MCF 10A (cell line): ENCODE measurements at regions of chr11 and their contacts with region 1.

Region 1: DNA sequence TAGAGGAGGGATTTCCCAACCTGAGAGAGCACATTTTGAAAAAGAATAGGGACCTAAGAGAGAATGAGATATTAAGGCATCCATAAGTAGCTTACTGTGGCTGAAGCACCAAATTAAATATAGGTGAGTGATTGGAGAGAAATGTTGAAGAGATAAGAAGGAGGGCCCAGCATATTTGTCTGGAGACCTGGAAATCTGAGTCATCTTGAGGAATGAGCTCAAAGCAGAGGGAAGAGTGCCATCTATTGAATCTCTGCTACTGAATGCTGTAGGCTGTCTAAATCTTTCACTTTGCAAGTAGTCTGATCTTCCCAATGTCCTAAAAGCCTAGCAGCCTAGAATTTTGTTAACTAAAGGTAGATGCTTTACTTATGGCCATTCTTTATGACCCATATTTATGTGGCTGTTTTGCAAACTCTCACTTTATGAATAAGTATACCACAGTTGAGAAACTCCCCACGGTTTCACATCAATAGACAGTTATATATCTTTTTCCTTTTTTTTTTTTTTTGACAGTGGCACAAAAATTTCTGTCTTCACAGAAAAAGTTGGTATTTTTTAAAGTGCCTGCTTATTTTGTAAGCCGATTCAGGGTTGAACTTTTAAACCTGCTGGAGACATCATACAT is 2093.5 kb downstream of the LRRC4C start:
- DNase-seq: peak; percentile 62
- H3K4me3 Mint-ChIP-seq: no peak overlapping the region
- H3K27ac Mint-ChIP-seq: no peak overlapping the region
- H3K4me1 Mint-ChIP-seq: peaks cover 7% of the 10 kb centered on the region
- H3K27me3 Mint-ChIP-seq: no peaks in the 10 kb centered on the region
- CTCF ChIP-seq: peak; percentile 34

Region 2: DNA sequence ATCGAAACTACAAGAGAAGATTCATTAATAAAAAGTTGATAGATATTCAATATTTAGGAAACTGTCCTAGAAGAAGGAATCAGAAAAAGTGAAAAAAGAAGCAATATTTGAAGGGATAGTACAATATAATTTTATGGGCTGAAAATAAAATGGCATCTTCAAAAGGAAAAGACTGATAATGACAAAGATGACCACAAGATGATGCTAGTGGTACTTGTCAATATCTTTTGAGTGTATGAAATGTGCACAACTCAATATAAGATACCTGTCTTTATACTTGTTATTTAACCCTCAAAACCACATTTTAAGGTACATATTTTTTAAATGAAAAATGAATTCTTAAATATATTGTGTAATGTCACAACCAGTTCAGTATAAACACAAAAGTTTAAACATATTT is 1708.3 kb before region 1 on chr11:
- CTCF ChIA-PET with region 1: no interaction called
- POLR2A ChIA-PET with region 1: no interaction called
- intact Hi-C with region 1: loop called (anchors 5 kb)
- DNase-seq: peak; percentile 36
- H3K4me3 Mint-ChIP-seq: no peak overlapping the region
- H3K27ac Mint-ChIP-seq: no peak overlapping the region
- H3K4me1 Mint-ChIP-seq: no peaks in the 10 kb centered on the region
- H3K27me3 Mint-ChIP-seq: no peaks in the 10 kb centered on the region
- CTCF ChIP-seq: peak; percentile 37

Region 3: GRCh38 chr11:38791302-38791961 is 574.5 kb before region 1 on chr11:
- CTCF ChIA-PET with region 1: interaction called, 9 read pairs
- POLR2A ChIA-PET with region 1: interaction called, 4 read pairs
- intact Hi-C with region 1: loop called (anchors 1 kb)
- DNase-seq: peak; percentile 82
- H3K4me3 Mint-ChIP-seq: no peak overlapping the region
- H3K27ac Mint-ChIP-seq: no peak overlapping the region
- H3K4me1 Mint-ChIP-seq: no peaks in the 10 kb centered on the region
- H3K27me3 Mint-ChIP-seq: no peaks in the 10 kb centered on the region
- CTCF ChIP-seq: peak; percentile 76

Region 4: DNA sequence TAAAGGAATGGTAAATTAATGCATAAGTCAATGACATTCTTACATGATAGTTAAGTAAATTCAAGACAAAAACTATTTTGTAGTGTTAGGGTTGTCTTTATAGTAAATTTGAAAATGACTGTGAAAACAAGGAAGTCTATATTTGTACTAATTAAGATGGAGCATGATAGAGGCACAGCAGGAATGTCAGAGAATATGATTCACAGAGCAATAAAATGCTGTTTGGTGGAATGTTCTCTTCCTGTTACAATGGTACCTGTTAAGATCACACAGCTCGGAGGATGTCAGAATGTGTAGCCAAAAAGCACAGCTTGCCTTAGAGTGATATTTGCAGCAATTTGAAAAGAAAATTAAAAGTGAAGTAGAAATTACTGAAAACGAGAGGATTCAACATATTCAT is 428.2 kb before region 1 on chr11:
- CTCF ChIA-PET with region 1: no interaction called
- POLR2A ChIA-PET with region 1: no interaction called
- intact Hi-C with region 1: no loop called
- DNase-seq: no peak
- H3K4me3 Mint-ChIP-seq: no peak overlapping the region
- H3K27ac Mint-ChIP-seq: no peak overlapping the region
- H3K4me1 Mint-ChIP-seq: peaks cover 8% of the 10 kb centered on the region
- H3K27me3 Mint-ChIP-seq: no peaks in the 10 kb centered on the region
- CTCF ChIP-seq: no peak

Region 5: GRCh38 chr11:39192671-39193070 is 173.3 kb before region 1 on chr11:
- CTCF ChIA-PET with region 1: no interaction called
- POLR2A ChIA-PET with region 1: no interaction called
- intact Hi-C with region 1: no loop called
- DNase-seq: no peak
- H3K4me3 Mint-ChIP-seq: no peak overlapping the region
- H3K27ac Mint-ChIP-seq: no peak overlapping the region
- H3K4me1 Mint-ChIP-seq: no peaks in the 10 kb centered on the region
- H3K27me3 Mint-ChIP-seq: no peaks in the 10 kb centered on the region
- CTCF ChIP-seq: no peak

Region 6: DNA sequence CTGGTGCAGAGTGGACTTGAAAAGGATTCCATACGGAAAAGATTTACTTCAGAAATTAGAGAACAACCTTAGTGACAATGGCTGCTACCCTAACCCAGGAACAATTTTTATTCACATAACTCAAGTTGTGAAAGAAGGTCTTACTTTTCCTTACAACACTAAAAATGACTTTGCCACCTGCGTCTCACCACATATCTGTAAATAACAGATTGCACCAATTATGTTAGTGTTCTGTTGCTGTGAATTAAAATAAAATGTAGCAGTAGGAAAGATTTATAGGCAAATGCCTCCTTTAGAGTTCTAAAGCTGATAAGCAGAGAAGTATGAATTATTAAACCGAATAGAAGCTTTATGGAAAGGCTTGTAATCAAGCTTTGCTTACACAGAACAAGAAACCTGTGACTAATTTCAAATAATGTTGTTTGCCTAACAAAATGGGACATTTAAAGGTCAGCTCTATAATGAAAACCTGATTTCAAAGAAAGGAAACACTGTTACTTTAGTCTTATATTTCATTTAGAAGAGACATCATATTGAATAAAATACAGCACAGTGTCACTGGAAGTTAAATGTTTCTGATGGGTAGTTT is 144.3 kb before region 1 on chr11:
- CTCF ChIA-PET with region 1: no interaction called
- POLR2A ChIA-PET with region 1: no interaction called
- intact Hi-C with region 1: no loop called
- DNase-seq: no peak
- H3K4me3 Mint-ChIP-seq: no peak overlapping the region
- H3K27ac Mint-ChIP-seq: no peak overlapping the region
- H3K4me1 Mint-ChIP-seq: no peaks in the 10 kb centered on the region
- H3K27me3 Mint-ChIP-seq: no peaks in the 10 kb centered on the region
- CTCF ChIP-seq: no peak

Region 7: GRCh38 chr11:39712581-39712980 is 346.7 kb after region 1 on chr11:
- CTCF ChIA-PET with region 1: no interaction called
- POLR2A ChIA-PET with region 1: no interaction called
- intact Hi-C with region 1: no loop called
- DNase-seq: no peak
- H3K4me3 Mint-ChIP-seq: peak overlapping the region; percentile 35
- H3K27ac Mint-ChIP-seq: no peak overlapping the region
- H3K4me1 Mint-ChIP-seq: no peaks in the 10 kb centered on the region
- H3K27me3 Mint-ChIP-seq: no peaks in the 10 kb centered on the region
- CTCF ChIP-seq: no peak